ENCODE measurements at regions of chr20 and their contacts with region 1.

Region 1: GRCh38 chr20:45971675-45972499 is at the start of gene ZNF335:
- DNase-seq: peak; percentile 95
- H3K4me3 ChIP-seq: peak within 1 kb of the TSS; percentile 57 to 79 (median 72)
- H3K27ac ChIP-seq: peak within 1 kb of the TSS; percentile 100
- H3K4me1 ChIP-seq: peaks cover 14% of the 10 kb centered on the region
- H3K27me3 ChIP-seq: peaks cover 2 to 3% of the 10 kb centered on the region in 2 experiments
- CTCF ChIP-seq: peak in 1 of 2 donors; percentile 17
- POLR2A ChIP-seq: no peak
- total RNA-seq, gene ZNF335: 22.8 and 23.9 TPM in 2 replicates

Region 2: GRCh38 chr20:44966030-44966961 is 1005.6 kb before region 1 on chr20 and contains the start of gene STK4:
- CTCF ChIA-PET with region 1: no interaction called
- POLR2A ChIA-PET with region 1: no interaction called
- dilution Hi-C with region 1: no loop called
- intact Hi-C with region 1: loop called (anchors 5 kb)
- DNase-seq: peak; percentile 95
- H3K4me3 ChIP-seq: peak within 1 kb of the TSS; percentile 59 to 92 (median 64)
- H3K27ac ChIP-seq: peak within 1 kb of the TSS; percentile 44
- H3K4me1 ChIP-seq: peaks cover 50% of the 10 kb centered on the region
- H3K27me3 ChIP-seq: no peaks in the 10 kb centered on the region
- CTCF ChIP-seq: peak; percentile 46 to 67
- POLR2A ChIP-seq: peak; percentile 49
- total RNA-seq, gene STK4: 28.2 and 29.6 TPM in 2 replicates

Region 3: DNA sequence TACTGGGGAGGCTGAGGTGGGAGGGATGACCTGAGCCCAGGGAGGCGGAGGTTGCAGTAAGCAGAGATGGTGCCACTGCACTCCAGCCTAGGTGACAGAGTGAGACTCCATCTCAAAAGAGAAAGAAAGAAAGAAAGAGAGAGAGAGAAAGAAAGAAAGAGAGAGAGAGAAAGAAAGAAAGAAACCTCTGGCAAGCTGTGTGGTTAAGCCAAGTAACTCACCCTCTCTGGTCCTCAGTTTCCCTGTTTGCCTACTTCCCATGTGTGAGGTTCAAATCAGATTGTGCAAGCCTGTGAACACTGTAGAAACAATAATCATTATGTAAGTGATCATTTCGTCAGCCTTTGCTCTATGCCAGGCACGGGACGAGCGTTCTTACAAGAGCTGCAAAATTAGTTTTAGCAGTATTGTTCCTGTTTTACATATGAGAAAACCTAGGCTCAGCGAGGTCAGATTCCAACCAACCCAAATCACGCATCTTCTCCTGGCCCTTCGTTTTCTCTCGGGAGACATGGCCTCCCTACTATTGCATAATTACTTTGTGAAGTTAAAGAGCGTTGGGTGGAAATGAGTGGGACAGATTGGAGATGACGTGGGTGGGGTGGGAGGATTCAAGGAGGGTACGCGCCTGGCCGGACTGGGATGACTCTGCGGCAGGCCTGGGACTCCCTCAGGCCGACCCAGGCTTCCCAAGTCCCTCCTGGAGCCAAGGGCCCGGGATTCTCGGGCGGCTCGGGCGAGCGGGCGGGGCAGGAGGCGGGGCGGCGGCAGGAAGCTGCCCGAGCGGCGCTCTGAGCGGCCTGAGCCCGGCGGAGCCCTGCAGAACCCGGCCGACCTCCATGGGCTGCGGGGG is 138.6 kb before region 1 on chr20 and contains the start of gene SNX21:
- CTCF ChIA-PET with region 1: interaction called, 14 read pairs
- POLR2A ChIA-PET with region 1: no interaction called
- dilution Hi-C with region 1: no loop called
- intact Hi-C with region 1: no loop called
- DNase-seq: peak; percentile 78
- H3K4me3 ChIP-seq: peak within 1 kb of the TSS; percentile 35 to 64 (median 47)
- H3K27ac ChIP-seq: peak within 1 kb of the TSS; percentile 71
- H3K4me1 ChIP-seq: peaks cover 20% of the 10 kb centered on the region
- H3K27me3 ChIP-seq: no peaks in the 10 kb centered on the region
- CTCF ChIP-seq: no peak
- POLR2A ChIP-seq: no peak
- total RNA-seq, gene SNX21: 11.9 and 14.9 TPM in 2 replicates

Region 4: DNA sequence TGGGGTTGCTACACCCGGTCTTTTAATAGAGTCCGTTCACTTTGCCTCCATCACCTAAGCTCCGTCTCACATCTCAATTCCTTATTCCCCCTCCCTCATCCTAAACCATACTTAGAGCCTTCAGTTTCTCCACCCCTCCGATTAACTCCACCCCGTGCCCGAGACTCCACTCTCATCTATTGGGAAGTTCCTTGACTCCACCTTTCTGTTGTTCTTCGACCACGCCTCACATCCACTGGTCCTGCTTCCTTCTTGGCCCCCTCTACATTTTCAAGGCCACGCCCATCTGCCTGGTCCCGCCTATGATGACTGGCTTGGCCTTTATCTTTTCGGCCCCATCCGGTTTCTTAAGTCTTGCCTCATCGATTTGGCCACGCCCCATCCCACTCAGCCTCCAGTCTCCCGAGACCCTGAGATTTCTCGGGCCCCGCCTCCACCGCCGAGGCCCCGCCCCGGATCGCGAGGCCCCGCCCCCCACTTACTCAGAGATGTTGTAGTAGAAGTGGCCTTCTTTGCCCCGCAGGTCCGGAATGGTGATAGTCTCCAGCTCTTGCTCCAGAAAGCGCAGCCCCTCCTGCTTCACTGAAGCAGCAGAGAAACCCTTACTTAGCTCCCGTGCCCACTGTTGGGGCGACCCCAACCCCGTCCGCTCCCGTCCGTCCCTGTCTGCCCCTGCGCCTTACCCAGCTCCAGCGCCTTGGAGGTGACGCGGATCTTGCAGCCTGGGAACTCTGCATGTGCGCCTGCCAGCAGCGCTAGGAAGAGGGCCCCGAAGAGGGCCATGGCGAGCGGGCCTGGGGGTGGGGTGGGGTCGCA is 61.0 kb before region 1 on chr20:
- CTCF ChIA-PET with region 1: interaction called, 6 read pairs
- POLR2A ChIA-PET with region 1: interaction called, 3 read pairs
- dilution Hi-C with region 1: no loop called
- intact Hi-C with region 1: loop called (anchors 1 kb)
- DNase-seq: peak; percentile 100
- H3K4me3 ChIP-seq: peak overlapping the region; percentile 6 to 62 (median 37)
- H3K27ac ChIP-seq: peak overlapping the region; percentile 43
- H3K4me1 ChIP-seq: peaks cover 28% of the 10 kb centered on the region
- H3K27me3 ChIP-seq: no peaks in the 10 kb centered on the region
- CTCF ChIP-seq: no peak
- POLR2A ChIP-seq: peak; percentile 30

Region 5: GRCh38 chr20:45953672-45954071 is 18.2 kb before region 1 on chr20:
- CTCF ChIA-PET with region 1: interaction called, 40 read pairs
- POLR2A ChIA-PET with region 1: no interaction called
- dilution Hi-C with region 1: no loop called
- intact Hi-C with region 1: no loop called
- DNase-seq: no peak
- H3K4me3 ChIP-seq: no peak overlapping the region
- H3K27ac ChIP-seq: no peak overlapping the region
- H3K4me1 ChIP-seq: no peaks in the 10 kb centered on the region
- H3K27me3 ChIP-seq: no peaks in the 10 kb centered on the region
- CTCF ChIP-seq: no peak
- POLR2A ChIP-seq: no peak

Region 6: GRCh38 chr20:46057856-46058598 is 86.1 kb after region 1 on chr20:
- CTCF ChIA-PET with region 1: interaction called, 10 read pairs
- POLR2A ChIA-PET with region 1: no interaction called
- dilution Hi-C with region 1: no loop called
- intact Hi-C with region 1: no loop called
- DNase-seq: peak; percentile 56
- H3K4me3 ChIP-seq: peak overlapping the region in 2 of 3 experiments; percentile 3 to 26
- H3K27ac ChIP-seq: no peak overlapping the region
- H3K4me1 ChIP-seq: peaks cover 27% of the 10 kb centered on the region
- H3K27me3 ChIP-seq: peaks cover 2 to 23% of the 10 kb centered on the region in 2 experiments
- CTCF ChIP-seq: peak in 1 of 2 donors; percentile 30
- POLR2A ChIP-seq: no peak

Region 7: DNA sequence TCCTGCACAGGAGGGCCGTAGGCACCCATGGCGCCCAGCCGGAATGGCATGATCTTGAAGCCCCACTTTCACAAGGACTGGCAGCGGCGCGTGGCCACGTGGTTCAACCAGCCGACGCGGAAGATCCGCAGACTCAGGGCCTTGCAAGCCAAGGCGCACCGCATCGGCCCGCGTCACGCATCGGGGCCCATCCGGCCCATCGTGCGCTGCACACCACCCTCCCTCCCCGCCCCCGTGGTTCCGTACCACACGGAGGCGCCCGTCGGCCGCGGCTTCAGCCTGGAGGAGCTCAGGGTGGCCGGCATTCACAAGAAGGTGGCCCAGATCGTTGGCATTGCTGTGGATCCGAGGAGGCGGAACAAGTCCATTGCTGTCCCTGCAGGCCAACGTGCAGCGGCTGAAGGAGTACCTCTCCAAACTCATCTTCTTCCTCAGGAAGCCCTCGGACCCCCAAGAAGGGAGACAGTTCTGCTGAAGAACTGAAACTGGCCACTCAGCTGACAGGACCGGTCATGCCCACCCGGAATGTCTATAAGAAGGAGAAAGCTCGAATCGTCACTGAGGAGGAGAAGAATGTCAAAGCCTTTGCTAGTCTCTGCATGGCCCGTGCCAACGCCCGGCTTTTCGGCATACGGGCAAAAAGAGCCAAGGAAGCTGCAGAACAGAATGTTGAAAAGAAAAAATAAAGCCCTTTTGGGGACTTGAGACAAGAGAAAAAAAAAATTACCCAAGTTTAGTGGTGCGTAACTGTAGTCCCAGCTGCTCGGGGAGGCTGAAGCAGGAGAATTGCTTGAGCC is 127.8 kb after region 1 on chr20:
- CTCF ChIA-PET with region 1: no interaction called
- POLR2A ChIA-PET with region 1: no interaction called
- dilution Hi-C with region 1: no loop called
- intact Hi-C with region 1: no loop called
- DNase-seq: peak; percentile 19
- H3K4me3 ChIP-seq: no peak overlapping the region
- H3K27ac ChIP-seq: no peak overlapping the region
- H3K4me1 ChIP-seq: no peaks in the 10 kb centered on the region
- H3K27me3 ChIP-seq: peaks cover 21 to 48% of the 10 kb centered on the region in 2 experiments
- CTCF ChIP-seq: peak in 1 of 2 donors; percentile 31
- POLR2A ChIP-seq: no peak